ENCODE measurements at regions of chr17 and their contacts with region 1.

Region 1: DNA sequence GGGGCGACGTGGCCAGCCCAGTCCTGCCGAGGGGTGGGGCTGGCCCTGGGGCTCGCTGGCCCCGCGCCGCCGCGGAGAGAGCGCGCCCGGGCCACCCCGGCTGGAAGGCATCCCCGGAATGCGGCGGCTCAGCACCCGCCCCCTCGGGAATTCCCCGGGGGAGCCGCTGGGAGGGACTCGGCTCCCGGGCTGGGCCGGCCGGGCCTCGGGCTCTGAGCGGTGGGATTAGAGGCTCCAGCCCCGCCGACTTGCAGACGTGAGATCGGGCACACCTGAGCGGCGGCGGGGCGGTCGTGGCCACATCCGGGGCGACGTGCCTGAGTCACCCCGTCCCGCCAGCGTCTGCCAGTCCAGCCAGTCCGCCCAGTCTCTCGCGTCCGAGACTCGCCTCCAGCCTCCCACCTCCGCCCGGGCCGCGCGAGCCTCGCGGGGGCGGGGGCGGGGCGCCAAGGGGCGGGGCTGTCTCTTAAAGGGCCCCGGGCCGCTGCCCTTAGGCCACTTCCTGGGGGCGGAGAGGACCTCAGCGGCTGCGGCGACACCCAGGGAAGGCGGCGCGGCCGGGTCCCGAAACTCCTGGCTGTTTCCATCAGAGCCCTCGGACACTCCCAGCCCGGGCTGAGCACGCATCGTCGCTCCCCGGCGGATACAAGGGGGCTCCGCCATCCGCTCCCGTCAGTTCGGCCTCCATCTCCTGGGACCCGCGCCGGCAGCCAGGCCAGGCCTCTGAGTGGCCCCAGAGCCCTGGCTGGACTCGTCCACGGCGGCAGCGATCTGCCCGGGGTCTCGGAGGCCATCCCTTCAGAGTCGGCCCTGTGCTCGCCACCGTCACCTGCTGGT is at the start of gene KCTD11:
- DNase-seq: peak; percentile 95
- H3K4me3 ChIP-seq: peak within 1 kb of the TSS; percentile 68 to 88 (median 74)
- H3K27ac ChIP-seq: peak within 1 kb of the TSS; percentile 92 to 98 (median 98)
- H3K4me1 ChIP-seq: peaks cover 7 to 58% (median 42%) of the 10 kb centered on the region in 4 donors
- H3K27me3 ChIP-seq: no peaks in the 10 kb centered on the region
- CTCF ChIP-seq: peak in 3 of 5 experiments; percentile 44 to 77 (median 62)
- EP300 ChIP-seq: no peak
- POLR2A ChIP-seq: peak; percentile 78
- total RNA-seq, gene KCTD11: 1.2 to 10.8 (median 7.8) TPM

Region 2: GRCh38 chr17:7280519-7281429 is 71.1 kb before region 1 on chr17:
- in situ Hi-C with region 1: loop called in 1 of 4 experiments (anchors 10 kb)
- intact Hi-C with region 1: no loop called
- DNase-seq: peak; percentile 91
- H3K4me3 ChIP-seq: peak overlapping the region; percentile 2 to 71 (median 48)
- H3K27ac ChIP-seq: peak overlapping the region; percentile 84 to 89 (median 86)
- H3K4me1 ChIP-seq: peaks cover 12 to 42% (median 33%) of the 10 kb centered on the region in 4 donors
- H3K27me3 ChIP-seq: no peaks in the 10 kb centered on the region
- CTCF ChIP-seq: peak; percentile 86 to 99 (median 96)
- EP300 ChIP-seq: peak; percentile 1
- POLR2A ChIP-seq: peak; percentile 17

Region 3: DNA sequence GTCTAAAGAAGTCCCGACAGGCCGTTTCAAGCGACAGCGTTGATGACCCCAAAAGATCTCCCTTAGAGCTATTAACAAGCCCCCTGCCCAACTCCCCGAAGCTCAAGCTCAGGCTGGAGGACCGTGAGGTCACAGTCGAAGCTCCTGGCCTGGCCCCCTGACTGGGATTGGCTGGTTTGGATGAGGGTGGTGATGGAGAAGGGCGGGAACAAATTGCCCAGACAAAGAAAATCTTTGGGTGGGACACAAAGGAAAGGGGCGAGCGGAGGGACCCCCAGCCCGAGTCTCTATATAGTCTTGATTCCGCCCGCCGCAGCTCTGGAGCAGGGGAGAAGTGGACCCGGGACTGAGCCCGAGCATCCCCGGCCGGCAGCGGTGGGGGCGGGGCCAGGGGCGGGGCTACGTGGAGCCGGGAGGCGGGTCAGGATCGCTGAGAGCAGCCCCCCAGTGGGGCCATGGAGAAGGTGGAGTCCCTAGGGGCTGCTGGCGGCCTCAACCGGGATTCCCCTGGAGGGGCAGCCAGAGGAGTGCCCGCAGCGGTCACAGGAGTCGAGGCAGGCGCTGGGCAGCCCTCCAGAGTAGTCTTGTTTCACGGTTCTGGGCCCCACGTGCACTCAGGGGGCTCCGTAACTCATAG is 21.8 kb before region 1 on chr17:
- in situ Hi-C with region 1: no loop called
- intact Hi-C with region 1: no loop called
- DNase-seq: peak; percentile 80
- H3K4me3 ChIP-seq: peak overlapping the region; percentile 50 to 89 (median 77)
- H3K27ac ChIP-seq: peak overlapping the region; percentile 90 to 95 (median 92)
- H3K4me1 ChIP-seq: peaks cover 7 to 21% (median 14%) of the 10 kb centered on the region in 4 donors
- H3K27me3 ChIP-seq: no peaks in the 10 kb centered on the region
- CTCF ChIP-seq: no peak
- EP300 ChIP-seq: no peak
- POLR2A ChIP-seq: no peak

Region 4: GRCh38 chr17:7435221-7435675 is 83.4 kb after region 1 on chr17 and contains the start of gene TMEM102:
- in situ Hi-C with region 1: loop called in 1 of 4 experiments (anchors 10 kb)
- intact Hi-C with region 1: loop called (anchors 1 kb)
- DNase-seq: peak; percentile 98
- H3K4me3 ChIP-seq: peak within 1 kb of the TSS; percentile 33 to 79 (median 53)
- H3K27ac ChIP-seq: peak within 1 kb of the TSS; percentile 82 to 90 (median 87)
- H3K4me1 ChIP-seq: peaks cover 22 to 44% (median 37%) of the 10 kb centered on the region in 4 donors
- H3K27me3 ChIP-seq: peaks cover 25% of the 10 kb centered on the region
- CTCF ChIP-seq: no peak
- EP300 ChIP-seq: no peak
- POLR2A ChIP-seq: peak; percentile 82
- total RNA-seq, gene TMEM102: 8.8 to 26.1 (median 16.3) TPM

Region 5: GRCh38 chr17:7557775-7558543 is 206.1 kb after region 1 on chr17:
- in situ Hi-C with region 1: no loop called
- intact Hi-C with region 1: loop called (anchors 10 kb)
- DNase-seq: peak; percentile 94
- H3K4me3 ChIP-seq: peak overlapping the region; percentile 15 to 98 (median 35)
- H3K27ac ChIP-seq: peak overlapping the region; percentile 93 to 98 (median 98)
- H3K4me1 ChIP-seq: peaks cover 37 to 59% (median 54%) of the 10 kb centered on the region in 4 donors
- H3K27me3 ChIP-seq: no peaks in the 10 kb centered on the region
- CTCF ChIP-seq: no peak
- EP300 ChIP-seq: peak; percentile 14
- POLR2A ChIP-seq: peak; percentile 94

Region 6: GRCh38 chr17:7798839-7799238 is 447.0 kb after region 1 on chr17:
- in situ Hi-C with region 1: no loop called
- intact Hi-C with region 1: loop called (anchors 2 kb)
- DNase-seq: no peak
- H3K4me3 ChIP-seq: no peak overlapping the region
- H3K27ac ChIP-seq: no peak overlapping the region
- H3K4me1 ChIP-seq: peaks cover 0 to 3% (median 0%) of the 10 kb centered on the region in 4 donors
- H3K27me3 ChIP-seq: no peaks in the 10 kb centered on the region
- CTCF ChIP-seq: no peak
- EP300 ChIP-seq: no peak
- POLR2A ChIP-seq: no peak

Region 7: DNA sequence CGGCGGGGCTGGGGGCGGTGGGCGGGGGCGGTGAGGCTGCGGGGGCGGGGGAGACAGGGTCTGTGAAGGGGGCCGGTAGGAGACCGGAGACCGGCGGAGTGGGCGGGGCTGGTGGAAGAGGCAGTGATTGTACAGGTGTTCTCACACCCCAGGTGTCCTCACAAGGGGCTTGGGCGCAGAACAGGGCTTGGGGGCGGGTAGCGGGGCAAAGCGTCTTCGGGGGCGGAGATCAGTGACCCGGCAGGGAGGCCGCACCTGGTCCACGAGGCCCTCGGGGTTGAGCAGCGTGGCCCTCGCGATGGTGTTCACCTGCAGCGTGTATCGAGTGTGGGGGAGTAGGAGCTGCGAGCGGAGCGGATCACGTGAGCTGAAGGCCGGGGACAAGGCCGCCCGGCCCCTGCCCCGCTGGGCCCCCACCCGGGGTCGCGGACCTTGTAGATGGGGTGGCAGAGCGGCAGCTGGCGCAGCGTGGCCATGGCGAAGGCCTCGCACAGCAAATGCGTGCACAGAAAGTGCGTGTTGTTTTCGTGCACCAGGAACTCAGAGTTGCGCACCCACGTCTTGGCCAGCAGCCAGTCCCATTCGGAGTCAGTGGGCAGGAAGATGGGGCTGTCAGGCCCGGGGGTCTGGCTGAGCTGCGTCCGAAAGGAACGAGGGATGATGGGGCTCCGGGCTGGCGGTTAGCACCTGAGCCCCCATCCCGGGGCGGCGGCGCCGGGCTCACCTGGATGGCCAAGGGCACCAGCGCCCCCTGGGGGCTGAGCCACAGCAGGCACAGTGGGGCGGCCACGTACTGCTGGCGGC is 758.0 kb after region 1 on chr17:
- in situ Hi-C with region 1: no loop called
- intact Hi-C with region 1: no loop called
- DNase-seq: peak; percentile 78
- H3K4me3 ChIP-seq: peak overlapping the region in 2 of 4 donors; percentile 39 to 42
- H3K27ac ChIP-seq: no peak overlapping the region
- H3K4me1 ChIP-seq: peaks cover 4 to 10% (median 7%) of the 10 kb centered on the region in 4 donors
- H3K27me3 ChIP-seq: peaks cover 69% of the 10 kb centered on the region
- CTCF ChIP-seq: peak; percentile 77 to 93 (median 87)
- EP300 ChIP-seq: no peak
- POLR2A ChIP-seq: no peak